GM12878 (cell line): ENCODE measurements at regions of chr6 and their contacts with region 1.

Region 1: DNA sequence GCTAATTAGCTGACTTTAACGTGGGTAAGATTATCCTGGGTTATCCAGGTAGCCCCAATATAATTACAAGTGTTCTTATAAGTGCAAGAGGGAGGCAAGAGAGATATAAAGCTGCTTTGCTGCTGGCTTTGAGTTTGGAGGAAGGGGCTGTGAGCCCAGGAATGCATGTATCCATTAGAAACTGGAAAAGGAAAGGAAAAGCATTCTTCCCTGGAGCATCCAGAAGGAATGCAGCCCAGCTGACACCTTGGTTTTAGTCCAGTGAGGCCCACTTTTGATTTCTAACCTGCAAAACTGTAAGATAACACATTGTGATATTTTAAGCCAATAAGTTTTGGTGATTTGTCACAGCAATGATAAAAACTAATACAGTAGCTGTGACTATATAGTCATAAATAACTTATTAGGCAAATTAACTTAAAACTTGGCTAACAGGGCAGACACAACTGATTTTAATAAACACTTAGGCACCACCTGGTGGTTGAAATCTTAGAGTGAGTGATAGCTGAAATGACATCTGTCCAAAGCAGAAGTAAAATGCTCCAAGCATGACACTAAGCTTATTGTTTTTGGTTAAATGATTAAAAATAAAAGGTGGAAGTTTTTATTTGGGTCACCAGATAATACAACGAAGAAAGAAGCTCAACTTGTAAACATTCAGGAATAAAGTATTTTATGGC is 35.6 kb downstream of the ADGRF4 start:
- DNase-seq: peak; percentile 7
- ATAC-seq: peak; percentile 85
- H3K4me3 ChIP-seq: no peak overlapping the region
- H3K27ac ChIP-seq: no peak overlapping the region
- H3K4me1 ChIP-seq: no peaks in the 10 kb centered on the region
- H3K27me3 ChIP-seq: no peaks in the 10 kb centered on the region
- CTCF ChIP-seq: peak; percentile 33 to 64 (median 51); a peak in 5 of 6 replicates
- EP300 ChIP-seq: no peak
- POLR2A ChIP-seq: no peak
- RAD21 ChIP-seq: peak; percentile 83

Region 2: DNA sequence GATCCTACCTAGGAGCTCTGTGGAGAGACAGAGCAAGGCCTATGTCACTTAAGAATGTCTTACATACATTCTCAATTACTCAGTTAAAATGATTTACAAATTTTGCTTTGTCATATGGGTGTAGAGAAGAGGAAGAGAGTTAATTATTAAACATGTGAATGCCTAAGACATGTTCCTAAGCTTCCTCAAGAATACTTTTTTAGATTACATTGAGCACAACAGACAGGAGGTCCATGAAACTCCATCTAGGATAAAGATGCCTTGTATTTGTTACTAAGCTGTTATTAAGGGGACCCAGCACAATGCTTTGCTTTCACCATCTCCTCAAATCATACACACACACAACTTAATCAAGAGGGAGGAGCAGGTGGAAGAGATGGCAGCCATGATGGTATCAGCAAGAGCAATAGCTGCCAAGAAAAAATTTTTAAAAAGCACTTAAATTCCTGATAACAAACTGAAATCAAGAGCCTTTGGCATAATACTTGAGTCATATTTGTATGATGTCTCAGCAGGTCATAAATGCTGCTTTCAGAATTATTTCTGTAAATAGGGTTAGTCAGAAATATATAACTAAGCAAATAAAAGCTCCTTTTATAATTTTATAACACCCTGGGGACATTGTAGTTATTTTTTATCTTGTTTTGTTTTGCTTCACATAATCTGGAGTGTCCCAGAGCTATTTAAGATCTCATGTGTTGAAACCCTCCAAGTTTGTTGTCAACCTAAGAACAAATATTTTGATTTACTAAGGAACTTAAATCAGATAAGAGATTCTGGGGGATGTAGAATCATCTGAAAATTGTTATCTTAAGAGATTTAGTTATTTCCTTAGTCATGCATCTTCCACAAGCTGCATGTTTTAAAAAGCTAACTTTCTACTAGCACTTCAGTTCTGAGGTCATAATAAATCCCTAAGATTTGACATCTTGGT is 326.4 kb before region 1 on chr6:
- CTCF ChIA-PET with region 1: interaction called, 57 read pairs
- POLR2A ChIA-PET with region 1: no interaction called
- RAD21 ChIA-PET with region 1: interaction called, 7 read pairs
- SMC1A ChIA-PET with region 1: interaction called, 49 read pairs
- in situ Hi-C with region 1: no loop called
- intact Hi-C with region 1: no loop called
- DNase-seq: no peak
- ATAC-seq: no peak
- H3K4me3 ChIP-seq: no peak overlapping the region
- H3K27ac ChIP-seq: no peak overlapping the region
- H3K4me1 ChIP-seq: no peaks in the 10 kb centered on the region
- H3K27me3 ChIP-seq: no peaks in the 10 kb centered on the region
- CTCF ChIP-seq: no peak
- EP300 ChIP-seq: no peak
- POLR2A ChIP-seq: no peak
- RAD21 ChIP-seq: no peak

Region 3: DNA sequence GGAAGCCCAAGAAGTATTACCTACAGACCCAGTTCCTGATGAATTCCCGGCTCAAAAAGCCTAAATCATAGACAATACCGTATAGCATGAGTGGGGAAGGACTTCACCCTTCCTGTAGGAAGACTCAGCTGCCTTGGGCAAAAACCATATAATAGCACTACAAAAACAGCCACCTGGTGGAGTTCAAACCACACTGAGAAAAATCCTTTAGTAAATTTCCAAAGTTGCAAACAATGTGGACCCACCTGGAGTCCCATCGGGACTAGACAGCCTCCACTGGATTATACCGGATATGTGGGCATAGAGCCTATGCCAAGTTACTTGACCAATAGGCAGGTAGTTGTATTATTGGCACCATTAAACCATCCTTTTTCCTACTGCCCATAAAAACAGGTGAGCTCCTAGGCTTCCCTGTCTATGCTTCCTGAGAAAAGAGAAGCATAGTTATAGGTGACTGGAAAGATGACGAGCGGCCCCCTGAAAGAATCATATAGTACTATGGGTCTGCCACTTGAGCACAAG is 87.4 kb before region 1 on chr6:
- CTCF ChIA-PET with region 1: interaction called, 13 read pairs
- POLR2A ChIA-PET with region 1: no interaction called
- RAD21 ChIA-PET with region 1: interaction called, 11 read pairs
- SMC1A ChIA-PET with region 1: interaction called, 15 read pairs
- in situ Hi-C with region 1: no loop called
- intact Hi-C with region 1: loop called (anchors 5 kb)
- DNase-seq: no peak
- ATAC-seq: no peak
- H3K4me3 ChIP-seq: no peak overlapping the region
- H3K27ac ChIP-seq: no peak overlapping the region
- H3K4me1 ChIP-seq: peaks cover 4% of the 10 kb centered on the region
- H3K27me3 ChIP-seq: no peaks in the 10 kb centered on the region
- CTCF ChIP-seq: 0 out of 6 replicates have a peak, but pooled peaks of 1 of the 3 experiments have one; percentile 0
- EP300 ChIP-seq: no peak
- POLR2A ChIP-seq: no peak
- RAD21 ChIP-seq: no peak

Region 4: DNA sequence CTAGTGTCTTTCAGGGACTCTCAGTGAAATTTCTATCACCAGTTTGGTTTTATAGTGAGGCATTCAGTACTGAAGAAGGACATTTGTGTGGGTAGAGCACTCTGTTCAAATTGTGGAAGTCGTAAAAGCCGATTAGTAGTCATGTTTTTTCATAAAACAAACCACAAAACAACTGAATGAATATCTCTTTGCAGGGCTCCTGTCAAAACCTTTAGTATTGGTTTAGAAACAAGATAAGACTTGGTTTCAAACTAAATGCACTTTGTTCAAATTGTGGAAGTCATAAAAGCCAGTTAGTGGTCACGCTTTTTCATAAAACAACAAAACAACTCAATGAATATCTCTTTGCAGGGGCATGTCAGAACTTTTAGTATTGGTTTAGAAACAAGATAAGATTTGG is 11.8 kb before region 1 on chr6:
- CTCF ChIA-PET with region 1: interaction called, 17 read pairs
- POLR2A ChIA-PET with region 1: interaction called, 3 read pairs
- RAD21 ChIA-PET with region 1: interaction called, 6 read pairs
- SMC1A ChIA-PET with region 1: interaction called, 19 read pairs
- in situ Hi-C with region 1: no loop called
- intact Hi-C with region 1: no loop called
- DNase-seq: peak; percentile 55
- ATAC-seq: peak; percentile 94
- H3K4me3 ChIP-seq: no peak overlapping the region
- H3K27ac ChIP-seq: no peak overlapping the region
- H3K4me1 ChIP-seq: peaks cover 5% of the 10 kb centered on the region; the same call in 1 of the 2 replicates
- H3K27me3 ChIP-seq: no peaks in the 10 kb centered on the region
- CTCF ChIP-seq: no peak
- EP300 ChIP-seq: no peak
- POLR2A ChIP-seq: no peak
- RAD21 ChIP-seq: no peak

Region 5: DNA sequence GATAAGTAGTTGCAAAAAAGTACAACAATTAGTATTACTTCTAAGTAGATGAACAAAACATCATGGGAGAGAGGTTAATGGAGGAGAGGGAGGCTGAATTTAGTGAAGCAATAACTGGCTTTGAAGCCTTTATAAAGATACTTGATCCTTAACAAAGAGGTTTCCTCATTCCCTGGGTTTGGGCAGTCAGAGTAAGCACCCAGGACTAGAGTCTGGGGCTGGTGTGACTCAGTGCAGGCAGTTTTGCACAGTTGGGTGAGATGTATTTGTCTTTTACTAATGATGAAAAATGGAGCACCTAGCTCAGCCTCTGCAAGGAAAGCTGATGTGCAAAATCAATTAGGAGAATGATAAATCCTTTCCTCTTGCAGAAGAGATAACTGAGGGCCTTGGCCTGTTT is 36.0 kb after region 1 on chr6:
- CTCF ChIA-PET with region 1: interaction called, 12 read pairs
- POLR2A ChIA-PET with region 1: no interaction called
- RAD21 ChIA-PET with region 1: no interaction called
- SMC1A ChIA-PET with region 1: interaction called, 5 read pairs
- in situ Hi-C with region 1: no loop called
- intact Hi-C with region 1: no loop called
- DNase-seq: no peak
- ATAC-seq: no peak
- H3K4me3 ChIP-seq: no peak overlapping the region
- H3K27ac ChIP-seq: no peak overlapping the region
- H3K4me1 ChIP-seq: no peaks in the 10 kb centered on the region
- H3K27me3 ChIP-seq: no peaks in the 10 kb centered on the region
- CTCF ChIP-seq: no peak
- EP300 ChIP-seq: no peak
- POLR2A ChIP-seq: no peak
- RAD21 ChIP-seq: no peak

Region 6: DNA sequence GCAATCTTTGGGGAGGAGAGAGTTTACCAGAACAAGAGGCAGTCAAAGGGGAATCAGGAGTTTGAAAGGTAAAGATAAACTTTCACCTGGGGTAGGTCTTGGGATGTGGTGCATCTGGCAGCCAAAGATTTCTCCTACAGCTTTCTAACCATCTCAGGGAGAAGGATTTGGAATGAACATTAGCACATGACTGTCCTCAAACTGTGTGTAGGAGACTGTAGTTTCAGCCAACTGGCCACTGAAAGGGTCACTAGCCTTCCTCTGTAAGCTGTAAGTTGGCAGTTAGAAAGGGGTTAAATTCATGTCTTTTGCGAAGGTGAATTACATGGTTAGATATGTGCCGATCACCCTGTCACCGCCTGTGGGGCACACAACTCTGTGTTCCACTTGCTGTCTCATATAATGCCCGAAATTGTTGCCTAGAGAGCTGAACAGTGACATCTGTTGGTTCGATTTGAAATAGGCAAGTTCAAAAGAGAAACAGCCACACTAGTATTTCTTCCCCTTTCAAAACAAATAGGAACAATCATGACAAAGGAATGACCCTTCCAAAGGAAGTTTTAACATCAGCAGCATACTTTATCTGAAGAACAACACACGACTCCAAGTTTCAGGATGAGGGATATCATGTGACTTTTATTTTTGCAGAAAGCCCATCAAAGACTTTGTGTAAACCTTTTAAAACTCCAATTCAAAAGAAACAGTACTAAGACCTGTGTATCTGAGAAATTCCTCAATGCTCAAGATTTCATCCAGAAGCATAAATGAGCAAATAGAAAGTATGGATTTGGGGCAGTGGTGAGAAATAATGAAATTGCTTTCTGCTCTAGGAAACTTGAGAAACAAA is 46.7 kb after region 1 on chr6:
- CTCF ChIA-PET with region 1: interaction called, 30 read pairs
- POLR2A ChIA-PET with region 1: no interaction called
- RAD21 ChIA-PET with region 1: interaction called, 11 read pairs
- SMC1A ChIA-PET with region 1: interaction called, 14 read pairs
- in situ Hi-C with region 1: no loop called
- intact Hi-C with region 1: loop called (anchors 2 kb)
- DNase-seq: no peak
- ATAC-seq: peak; percentile 96
- H3K4me3 ChIP-seq: no peak overlapping the region
- H3K27ac ChIP-seq: no peak overlapping the region
- H3K4me1 ChIP-seq: no peaks in the 10 kb centered on the region
- H3K27me3 ChIP-seq: peaks cover 0 to 2% of the 10 kb centered on the region in 2 experiments; a peak in 2 of 4 replicates
- CTCF ChIP-seq: peak; percentile 60 to 65 (median 61)
- EP300 ChIP-seq: no peak
- POLR2A ChIP-seq: no peak
- RAD21 ChIP-seq: peak; percentile 86

Region 7: GRCh38 chr6:47787620-47788497 is 53.8 kb after region 1 on chr6:
- CTCF ChIA-PET with region 1: interaction called, 30 read pairs
- POLR2A ChIA-PET with region 1: no interaction called
- RAD21 ChIA-PET with region 1: interaction called, 3 read pairs
- SMC1A ChIA-PET with region 1: no interaction called
- in situ Hi-C with region 1: no loop called
- intact Hi-C with region 1: no loop called
- DNase-seq: no peak
- ATAC-seq: peak; percentile 96
- H3K4me3 ChIP-seq: no peak overlapping the region
- H3K27ac ChIP-seq: no peak overlapping the region
- H3K4me1 ChIP-seq: no peaks in the 10 kb centered on the region
- H3K27me3 ChIP-seq: peaks cover 0 to 2% of the 10 kb centered on the region in 2 experiments; a peak in 1 of 4 replicates
- CTCF ChIP-seq: peak; percentile 88 to 94 (median 93); a peak in 5 of 6 replicates
- EP300 ChIP-seq: no peak
- POLR2A ChIP-seq: no peak
- RAD21 ChIP-seq: peak; percentile 92